BJ (cell line): ENCODE measurements at regions of chr5 and their contacts with region 1.

Region 1: GRCh38 chr5:147188200-147189108 is 46.4 kb upstream of the STK32A start:
- DNase-seq: no peak
- H3K4me3 ChIP-seq: no peak overlapping the region
- H3K27me3 ChIP-seq: no peaks in the 10 kb centered on the region
- CTCF ChIP-seq: peak; percentile 74

Region 2: DNA sequence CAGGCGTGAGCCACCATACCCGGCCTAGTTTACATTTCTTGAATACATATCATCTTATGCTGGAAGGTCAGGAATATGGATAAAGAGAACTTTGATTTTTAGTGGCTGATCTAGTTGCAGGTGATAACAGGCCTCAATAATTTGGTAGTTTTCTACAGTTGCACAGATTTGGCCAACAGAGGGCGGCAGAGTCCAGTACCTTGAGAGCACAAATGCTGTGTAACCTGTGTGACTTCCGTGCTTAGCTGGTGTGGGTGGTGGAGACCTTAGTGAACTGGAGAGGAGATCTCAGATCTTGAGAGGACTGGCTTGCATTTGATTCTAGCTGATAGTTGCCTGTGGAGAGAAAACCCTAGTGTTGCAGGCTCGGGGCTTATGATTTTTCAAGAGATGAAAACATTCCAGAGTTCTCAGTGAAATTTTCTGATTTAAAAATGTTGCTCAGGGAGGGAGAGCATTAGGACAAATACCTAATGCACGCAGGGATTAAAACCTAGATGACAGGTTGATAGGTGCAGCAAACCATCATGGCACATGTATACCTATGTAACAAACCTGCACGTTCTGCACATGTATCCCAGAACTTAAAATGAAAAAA is 655.1 kb before region 1 on chr5:
- CTCF ChIA-PET with region 1: interaction called, 34 read pairs
- POLR2A ChIA-PET with region 1: no interaction called
- DNase-seq: no peak
- H3K4me3 ChIP-seq: no peak overlapping the region
- H3K27me3 ChIP-seq: 0 out of 2 replicates have a peak, but pooled peaks cover 2% of the 10 kb centered on the region
- CTCF ChIP-seq: peak; percentile 90

Region 3: GRCh38 chr5:146840691-146841090 is 347.8 kb before region 1 on chr5:
- CTCF ChIA-PET with region 1: no interaction called
- POLR2A ChIA-PET with region 1: no interaction called
- DNase-seq: no peak
- H3K4me3 ChIP-seq: no peak overlapping the region
- H3K27me3 ChIP-seq: no peaks in the 10 kb centered on the region
- CTCF ChIP-seq: no peak

Region 4: GRCh38 chr5:147098233-147098790 is 90.1 kb before region 1 on chr5:
- CTCF ChIA-PET with region 1: interaction called, 81 read pairs
- POLR2A ChIA-PET with region 1: no interaction called
- DNase-seq: peak; percentile 4
- H3K4me3 ChIP-seq: no peak overlapping the region
- H3K27me3 ChIP-seq: no peaks in the 10 kb centered on the region
- CTCF ChIP-seq: peak; percentile 60

Region 5: GRCh38 chr5:147177125-147177840 is 11.2 kb before region 1 on chr5:
- CTCF ChIA-PET with region 1: interaction called, 30 read pairs
- POLR2A ChIA-PET with region 1: no interaction called
- DNase-seq: no peak
- H3K4me3 ChIP-seq: no peak overlapping the region
- H3K27me3 ChIP-seq: no peaks in the 10 kb centered on the region
- CTCF ChIP-seq: no peak

Region 6: DNA sequence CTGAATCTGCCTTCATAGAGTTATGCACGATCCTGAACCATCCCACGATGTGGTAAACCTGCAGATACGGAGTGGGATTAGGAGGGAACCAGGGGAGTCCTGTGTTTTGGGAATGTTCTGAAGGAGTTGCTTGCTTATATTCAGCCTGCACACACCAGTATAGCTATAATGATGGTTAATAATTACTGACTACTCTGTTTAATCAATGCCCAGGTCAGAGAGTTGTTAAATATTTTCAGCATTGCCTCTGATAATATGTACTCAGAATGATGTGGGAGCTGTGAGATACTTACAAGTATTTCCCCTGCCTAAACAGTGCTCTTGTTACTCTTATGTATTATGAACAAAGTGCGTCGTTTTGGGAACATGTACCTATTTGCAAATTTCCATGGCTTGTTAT is 11.5 kb after region 1 on chr5:
- CTCF ChIA-PET with region 1: interaction called, 18 read pairs
- POLR2A ChIA-PET with region 1: no interaction called
- DNase-seq: no peak
- H3K4me3 ChIP-seq: no peak overlapping the region
- H3K27me3 ChIP-seq: no peaks in the 10 kb centered on the region; the same call in 1 of the 2 replicates
- CTCF ChIP-seq: no peak

Region 7: GRCh38 chr5:147375151-147375550 is 186.7 kb after region 1 on chr5:
- CTCF ChIA-PET with region 1: no interaction called
- POLR2A ChIA-PET with region 1: no interaction called
- DNase-seq: no peak
- H3K4me3 ChIP-seq: no peak overlapping the region
- H3K27me3 ChIP-seq: no peaks in the 10 kb centered on the region
- CTCF ChIP-seq: no peak